ENCODE measurements at regions of chr1 and their contacts with region 1.

Region 1: DNA sequence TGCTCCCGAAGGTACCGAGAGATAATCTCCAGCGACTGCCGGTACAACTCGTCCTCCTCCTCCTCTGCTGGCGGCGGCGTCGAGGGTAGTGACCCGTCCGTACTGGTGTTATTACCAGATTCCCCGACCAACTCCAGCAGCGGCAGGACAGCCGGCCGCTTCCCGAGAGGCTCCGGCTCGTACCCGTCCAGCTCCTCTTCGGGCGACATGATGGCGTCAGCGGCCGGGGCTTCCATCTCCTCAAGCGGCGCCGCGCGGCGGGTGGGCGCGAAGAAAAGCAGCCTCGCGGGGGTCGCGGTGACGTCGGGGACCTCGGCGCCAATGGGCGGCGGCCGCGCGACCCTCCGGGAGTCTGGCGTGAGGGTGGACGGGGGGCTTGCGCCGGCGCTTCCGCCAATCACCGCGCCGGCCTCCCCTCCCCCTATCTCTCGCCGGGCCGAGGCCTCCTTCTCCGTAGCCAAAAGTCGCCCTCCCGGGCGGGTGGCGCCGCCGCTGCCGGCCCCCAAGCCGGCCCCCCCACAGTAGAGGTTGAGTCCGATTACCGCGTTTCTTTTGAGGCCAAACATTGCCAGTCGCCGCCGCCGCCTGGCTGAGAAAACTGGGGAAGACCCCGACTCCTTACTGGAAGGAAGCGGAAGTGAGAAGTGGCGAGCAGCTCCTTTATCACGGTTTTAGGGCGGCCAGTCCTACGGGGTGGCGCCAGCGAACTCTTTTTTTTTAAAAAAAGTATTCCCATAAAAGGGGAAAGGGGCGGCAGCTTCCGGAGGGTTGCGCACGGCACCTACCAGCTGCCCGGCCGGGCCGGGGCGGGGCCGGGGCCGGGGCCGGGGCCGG is at the start of gene MCL1:
- DNase-seq: peak; percentile 99
- ATAC-seq: peak; percentile 27
- H3K4me3 ChIP-seq: peak within 1 kb of the TSS; percentile 93
- H3K27ac ChIP-seq: peak within 1 kb of the TSS; percentile 89
- H3K4me1 ChIP-seq: peaks cover 26% of the 10 kb centered on the region
- H3K27me3 ChIP-seq: no peaks in the 10 kb centered on the region
- CTCF ChIP-seq: no peak
- total RNA-seq, gene MCL1: 285 and 376 TPM in 2 replicates

Region 2: DNA sequence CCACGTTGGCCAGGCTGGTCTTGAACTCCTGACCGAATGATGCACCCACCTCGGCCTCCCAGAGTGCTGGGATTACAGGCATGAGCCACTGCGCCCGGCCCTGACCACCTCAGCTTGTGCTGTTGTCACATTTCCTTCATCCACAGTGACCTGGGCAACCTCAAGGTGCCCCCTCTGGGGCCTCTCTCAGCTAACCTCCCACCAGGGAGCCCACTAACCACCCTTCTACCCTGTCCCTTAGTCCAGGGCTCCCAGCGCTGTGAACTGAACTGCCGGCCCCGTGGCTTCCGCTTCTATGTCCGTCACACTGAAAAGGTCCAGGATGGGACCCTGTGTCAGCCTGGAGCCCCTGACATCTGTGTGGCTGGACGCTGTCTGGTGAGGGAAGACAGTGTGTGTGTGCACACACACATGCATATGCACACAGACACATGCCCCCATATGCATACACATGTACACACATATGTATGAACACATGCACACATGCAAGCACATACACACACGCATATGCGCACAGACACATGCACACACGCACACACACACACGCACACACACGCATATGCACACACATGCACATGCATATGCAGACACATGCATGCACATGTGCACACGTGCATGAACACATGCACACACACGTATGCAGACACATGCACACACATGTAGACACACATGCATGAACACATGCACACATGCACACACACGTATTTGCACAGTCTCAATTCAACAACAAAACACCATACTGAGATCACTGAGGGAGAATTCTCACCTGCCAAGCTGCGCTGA is 23.8 kb before region 1 on chr1:
- CTCF ChIA-PET with region 1: interaction called, 3 read pairs
- POLR2A ChIA-PET with region 1: interaction called, 15 read pairs
- intact Hi-C with region 1: no loop called
- DNase-seq: no peak
- ATAC-seq: no peak
- H3K4me3 ChIP-seq: no peak overlapping the region
- H3K27ac ChIP-seq: no peak overlapping the region
- H3K4me1 ChIP-seq: peaks cover 20% of the 10 kb centered on the region
- H3K27me3 ChIP-seq: no peaks in the 10 kb centered on the region
- CTCF ChIP-seq: no peak

Region 3: GRCh38 chr1:150603711-150604110 is 24.5 kb after region 1 on chr1:
- CTCF ChIA-PET with region 1: no interaction called
- POLR2A ChIA-PET with region 1: interaction called, 11 read pairs
- intact Hi-C with region 1: loop called (anchors 2 kb)
- DNase-seq: no peak
- ATAC-seq: no peak
- H3K4me3 ChIP-seq: no peak overlapping the region
- H3K27ac ChIP-seq: peak overlapping the region; percentile 92
- H3K4me1 ChIP-seq: peaks cover 19% of the 10 kb centered on the region
- H3K27me3 ChIP-seq: no peaks in the 10 kb centered on the region
- CTCF ChIP-seq: no peak

Region 4: GRCh38 chr1:150621497-150622302 is 42.5 kb after region 1 on chr1:
- CTCF ChIA-PET with region 1: interaction called, 4 read pairs
- POLR2A ChIA-PET with region 1: interaction called, 11 read pairs
- intact Hi-C with region 1: loop called (anchors 2 kb)
- DNase-seq: peak; percentile 58
- ATAC-seq: no peak
- H3K4me3 ChIP-seq: no peak overlapping the region
- H3K27ac ChIP-seq: peak overlapping the region; percentile 93
- H3K4me1 ChIP-seq: peaks cover 53% of the 10 kb centered on the region
- H3K27me3 ChIP-seq: no peaks in the 10 kb centered on the region
- CTCF ChIP-seq: peak; percentile 82

Region 5: DNA sequence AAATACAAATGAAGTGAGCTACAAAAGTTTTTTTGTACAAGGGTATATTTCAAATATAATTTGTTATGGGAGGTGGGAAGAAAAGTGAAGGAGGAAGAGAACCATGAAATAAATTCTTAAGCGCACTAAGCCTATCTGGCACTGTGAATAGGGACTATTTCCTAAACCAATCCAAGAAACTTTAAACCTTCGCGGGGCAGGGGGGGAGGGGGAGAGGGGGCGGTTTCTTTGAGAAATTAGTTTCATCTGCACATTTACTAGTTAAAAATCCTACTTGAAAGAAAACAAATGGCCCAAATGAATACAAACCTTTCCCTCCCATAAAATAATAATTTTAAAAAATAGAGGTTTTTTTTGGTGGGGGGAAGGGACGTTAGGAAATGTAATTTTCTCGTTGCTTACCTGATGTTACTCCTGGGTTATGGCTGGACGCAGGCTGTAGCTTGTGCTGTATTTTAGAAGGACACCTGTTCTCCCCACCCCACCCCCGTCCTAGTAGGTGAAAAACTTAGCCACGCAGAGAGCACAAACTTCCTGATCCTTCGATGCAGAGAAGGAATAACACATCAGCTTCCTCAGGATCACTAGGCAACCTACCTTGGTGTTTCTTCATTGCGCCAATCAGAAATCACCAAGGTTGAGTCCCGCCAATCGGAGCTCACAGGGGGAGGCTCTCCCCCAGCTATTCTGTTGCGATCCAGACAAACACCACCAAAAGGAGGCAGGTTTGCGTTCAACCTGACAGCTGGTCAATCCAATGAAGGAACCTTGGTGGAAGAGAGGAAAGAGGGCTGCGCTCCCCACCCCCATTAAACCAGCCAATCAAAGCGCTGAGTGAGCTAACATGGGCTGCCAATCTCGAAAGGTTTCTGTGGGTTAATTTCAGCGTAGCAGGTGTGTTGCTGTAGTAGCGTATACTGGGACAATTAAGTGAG is 117.7 kb after region 1 on chr1 and contains the start of gene GOLPH3L:
- CTCF ChIA-PET with region 1: interaction called, 3 read pairs
- POLR2A ChIA-PET with region 1: interaction called, 24 read pairs
- intact Hi-C with region 1: no loop called
- DNase-seq: peak; percentile 99
- ATAC-seq: peak; percentile 96
- H3K4me3 ChIP-seq: peak within 1 kb of the TSS; percentile 78
- H3K27ac ChIP-seq: 0 out of 2 replicates have a peak within 1 kb of the TSS, but pooled peaks have one; percentile 19
- H3K4me1 ChIP-seq: peaks cover 28% of the 10 kb centered on the region
- H3K27me3 ChIP-seq: no peaks in the 10 kb centered on the region
- CTCF ChIP-seq: no peak
- total RNA-seq, gene GOLPH3L: 9.6 and 15.6 TPM in 2 replicates

Region 6: GRCh38 chr1:150979092-150980056 is 400.2 kb after region 1 on chr1:
- CTCF ChIA-PET with region 1: no interaction called
- POLR2A ChIA-PET with region 1: interaction called, 19 read pairs
- intact Hi-C with region 1: no loop called
- DNase-seq: peak; percentile 99
- ATAC-seq: peak; percentile 13
- H3K4me3 ChIP-seq: no peak overlapping the region
- H3K27ac ChIP-seq: no peak overlapping the region
- H3K4me1 ChIP-seq: peaks cover 42% of the 10 kb centered on the region
- H3K27me3 ChIP-seq: no peaks in the 10 kb centered on the region
- CTCF ChIP-seq: peak; percentile 100

Measured in PC-3 (cell line).